Activated CD4-positive, alpha-beta T cell treated with anti-CD3 and anti-CD28 coated beads, Interleukin-2, amount 10 ng/mL, durations not matched to agents 24 days and 14 days (primary cell): ENCODE measurements at regions of chr4 and their contacts with region 1.

Region 1: GRCh38 chr4:67909905-67910584 is 26.2 kb upstream of the TMPRSS11D start:
- DNase-seq: no peak
- H3K4me3 Mint-ChIP-seq: no peak overlapping the region
- H3K27ac Mint-ChIP-seq: no peak overlapping the region
- H3K4me1 Mint-ChIP-seq: no peaks in the 10 kb centered on the region
- H3K27me3 Mint-ChIP-seq: peaks cover 17% of the 10 kb centered on the region

Region 2: DNA sequence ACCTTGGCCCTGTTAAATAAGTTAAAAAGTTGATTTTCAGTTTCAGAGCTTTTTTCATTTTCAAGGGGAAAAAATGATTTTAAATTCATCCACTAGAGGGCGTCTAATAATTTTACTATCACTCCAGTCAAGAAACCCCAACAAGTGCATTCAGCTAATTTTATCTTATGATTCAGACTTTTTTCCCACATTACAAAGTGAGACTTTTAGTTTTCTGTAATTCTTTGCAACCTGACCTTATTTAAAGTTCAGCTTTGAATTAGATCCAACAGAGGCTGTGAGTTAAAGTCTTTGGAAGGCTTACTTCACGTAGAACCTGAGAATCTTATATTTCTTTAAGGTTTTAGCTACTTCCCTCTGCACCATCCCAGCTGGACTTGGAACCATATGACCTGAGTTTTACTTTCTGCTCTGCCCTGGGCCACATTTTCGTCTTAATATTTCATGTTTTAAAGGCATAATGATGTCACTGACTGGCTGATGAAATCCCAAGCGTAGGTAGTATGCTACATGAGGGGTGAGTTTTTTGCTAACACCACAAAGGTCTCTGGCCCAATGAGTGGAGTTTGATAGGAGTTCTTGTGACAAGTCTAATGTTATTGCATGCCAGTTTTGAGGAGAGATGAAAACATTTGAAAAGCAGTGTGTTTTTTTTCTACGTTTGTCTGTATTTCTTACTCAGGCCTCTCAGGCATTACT is 163.1 kb before region 1 on chr4:
- intact Hi-C with region 1: loop called (anchors 5 kb)
- DNase-seq: no peak
- H3K4me3 Mint-ChIP-seq: no peak overlapping the region
- H3K27ac Mint-ChIP-seq: no peak overlapping the region
- H3K4me1 Mint-ChIP-seq: peaks cover 16% of the 10 kb centered on the region
- H3K27me3 Mint-ChIP-seq: no peaks in the 10 kb centered on the region